ENCODE measurements at regions of chr10 and their contacts with region 1.

Region 1: GRCh38 chr10:22611425-22612115 is 102.8 kb downstream of the PIP4K2A start:
- DNase-seq: peak; percentile 86
- H3K4me3 Mint-ChIP-seq: peak overlapping the region; percentile 63
- H3K27ac Mint-ChIP-seq: peak overlapping the region; percentile 93
- H3K4me1 Mint-ChIP-seq: peaks cover 90% of the 10 kb centered on the region
- H3K27me3 Mint-ChIP-seq: no peaks in the 10 kb centered on the region

Region 2: GRCh38 chr10:22573820-22574569 is 37.6 kb before region 1 on chr10:
- CTCF ChIA-PET with region 1: interaction called, 11 read pairs
- DNase-seq: peak; percentile 49
- H3K4me3 Mint-ChIP-seq: no peak overlapping the region
- H3K27ac Mint-ChIP-seq: peak overlapping the region; percentile 72
- H3K4me1 Mint-ChIP-seq: peaks cover 37% of the 10 kb centered on the region
- H3K27me3 Mint-ChIP-seq: no peaks in the 10 kb centered on the region

Measured in activated naive CD4-positive, alpha-beta T cell treated with anti-CD3 and anti-CD28 coated beads, Interleukin-2, amount 10 ng/mL, durations not matched to agents 7 days and 5 days (primary cell).